Dendritic cell treated with granulocyte-macrophage colony-stimulating factor and Interleukin-4, amounts not matched to agents 40 ng/mL and 50 ng/mL, for 4 days (primary cell): ENCODE measurements at regions of chr1 and their contacts with region 1.

Region 1: GRCh38 chr1:73755649-73756048 is 442.3 kb downstream of the LRRIQ3 start:
- H3K4me3 Mint-ChIP-seq: no peak overlapping the region
- H3K27ac Mint-ChIP-seq: no peak overlapping the region
- H3K4me1 Mint-ChIP-seq: no peaks in the 10 kb centered on the region
- H3K27me3 Mint-ChIP-seq: no peaks in the 10 kb centered on the region

Region 2: DNA sequence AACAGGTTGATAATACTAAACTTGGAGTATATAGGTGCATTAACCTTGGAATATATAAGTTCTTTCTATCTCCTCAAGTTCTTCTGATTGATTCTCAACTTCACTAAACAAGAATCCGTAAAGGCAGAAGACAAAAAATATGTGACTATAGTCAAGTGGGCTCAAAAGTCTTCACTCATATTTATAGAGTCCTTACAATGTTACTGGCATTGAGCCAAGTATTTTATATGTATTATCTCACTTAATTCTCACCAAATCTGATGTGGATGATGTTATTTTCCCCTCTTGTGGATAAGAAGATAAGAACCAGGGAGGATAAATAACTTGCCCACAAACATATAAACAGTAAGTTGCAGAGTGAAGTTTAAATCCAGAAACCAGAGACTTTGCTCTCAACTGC is 44.6 kb before region 1 on chr1:
- intact Hi-C with region 1: no loop called
- H3K4me3 Mint-ChIP-seq: no peak overlapping the region
- H3K27ac Mint-ChIP-seq: no peak overlapping the region
- H3K4me1 Mint-ChIP-seq: no peaks in the 10 kb centered on the region
- H3K27me3 Mint-ChIP-seq: no peaks in the 10 kb centered on the region

Region 3: GRCh38 chr1:73813716-73814115 is 58.1 kb after region 1 on chr1:
- intact Hi-C with region 1: loop called (anchors 10 kb)
- H3K4me3 Mint-ChIP-seq: no peak overlapping the region
- H3K27ac Mint-ChIP-seq: no peak overlapping the region
- H3K4me1 Mint-ChIP-seq: no peaks in the 10 kb centered on the region
- H3K27me3 Mint-ChIP-seq: no peaks in the 10 kb centered on the region